ENCODE measurements at regions of chr9 and their contacts with region 1.

Region 1: DNA sequence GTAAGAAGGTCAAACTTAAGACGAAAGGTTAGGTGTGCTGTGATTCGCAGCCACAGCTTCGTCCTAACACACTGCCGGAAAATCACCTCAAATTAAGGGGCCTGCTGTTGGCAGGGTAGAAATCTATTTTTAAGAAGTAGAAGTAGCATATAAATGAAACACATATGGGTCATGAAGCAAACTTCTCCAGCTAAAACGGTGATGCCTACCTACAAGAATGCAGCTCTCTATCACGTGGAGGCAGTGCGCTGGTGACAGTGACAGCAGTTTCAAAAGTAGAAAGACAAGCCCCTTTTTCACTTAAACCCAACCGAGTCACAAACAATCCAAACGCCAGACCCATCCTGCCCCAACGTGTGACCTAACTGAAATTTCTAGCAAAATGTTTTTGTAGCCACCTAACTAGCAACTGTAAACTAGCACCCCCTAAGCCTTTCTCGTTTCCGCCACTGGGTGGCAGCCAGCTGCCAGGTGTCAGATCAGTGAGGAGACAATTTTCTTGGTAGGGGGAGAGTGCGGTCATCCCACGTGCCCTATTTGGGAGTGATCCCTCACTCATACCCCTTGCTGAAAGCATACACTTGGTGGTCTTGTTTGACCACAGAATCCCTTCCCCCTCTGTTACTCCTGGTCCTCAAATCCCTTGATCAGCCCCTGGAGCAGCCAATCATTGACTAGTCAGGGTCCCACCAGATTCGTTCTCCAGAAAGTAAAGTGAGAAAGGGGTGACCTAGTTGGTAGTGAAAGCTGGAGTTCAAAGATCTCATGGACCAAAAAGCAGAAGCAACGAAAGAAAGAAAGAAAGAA is 71.8 kb upstream of the MAMDC2 start:
- H3K4me3 Mint-ChIP-seq: no peak overlapping the region
- H3K27ac Mint-ChIP-seq: no peak overlapping the region
- H3K4me1 Mint-ChIP-seq: peaks cover 12% of the 10 kb centered on the region
- H3K27me3 Mint-ChIP-seq: peaks cover 3% of the 10 kb centered on the region

Region 2: GRCh38 chr9:70111042-70111602 is 139.3 kb after region 1 on chr9:
- intact Hi-C with region 1: loop called (anchors 1 kb)
- H3K4me3 Mint-ChIP-seq: no peak overlapping the region
- H3K27ac Mint-ChIP-seq: no peak overlapping the region
- H3K4me1 Mint-ChIP-seq: peaks cover 19% of the 10 kb centered on the region
- H3K27me3 Mint-ChIP-seq: peaks cover 4% of the 10 kb centered on the region

Region 3: GRCh38 chr9:70229579-70229978 is 257.7 kb after region 1 on chr9:
- intact Hi-C with region 1: loop called (anchors 10 kb)
- H3K4me3 Mint-ChIP-seq: no peak overlapping the region
- H3K27ac Mint-ChIP-seq: no peak overlapping the region
- H3K4me1 Mint-ChIP-seq: no peaks in the 10 kb centered on the region
- H3K27me3 Mint-ChIP-seq: no peaks in the 10 kb centered on the region